CD8-positive, alpha-beta T cell (primary cell): ENCODE measurements at regions of chr1 and their contacts with region 1.

Region 1: DNA sequence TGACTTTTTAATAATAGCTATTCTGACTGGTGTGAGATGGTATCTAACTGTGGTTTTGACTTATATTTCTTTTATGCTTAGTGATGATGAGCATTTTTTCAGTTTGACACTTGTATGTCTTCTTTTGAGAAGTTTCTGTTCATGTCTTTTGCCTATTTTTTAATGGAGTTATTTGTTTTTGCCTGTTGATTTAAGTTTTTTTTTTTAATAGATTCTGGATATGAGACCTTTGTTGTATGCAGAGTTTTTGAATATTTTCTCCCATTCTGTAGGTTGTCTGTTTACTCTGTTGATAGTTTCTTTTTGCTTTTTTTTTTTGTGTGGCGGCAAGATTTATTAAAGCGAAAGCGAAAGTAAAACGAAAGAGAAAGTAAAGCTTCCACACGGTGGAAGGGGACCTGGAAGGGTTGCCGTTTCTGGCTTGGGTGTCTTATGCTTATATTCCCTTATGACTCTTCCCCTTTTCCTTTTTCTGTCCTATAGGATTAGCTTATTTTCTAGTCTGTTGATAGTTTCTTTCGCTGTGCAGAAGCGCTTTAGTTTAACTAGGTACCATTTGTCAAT is 67.6 kb downstream of the TBX19 start:
- DNase-seq: peak in 3 of 9 experiments; percentile 24 to 79 (median 63)
- ATAC-seq: peak; percentile 52
- H3K4me3 ChIP-seq: peak overlapping the region; percentile 42 to 52
- H3K4me3 Mint-ChIP-seq: peak overlapping the region; percentile 83
- H3K27ac ChIP-seq: peak overlapping the region; percentile 28 to 34
- H3K27ac Mint-ChIP-seq: peak overlapping the region; percentile 87
- H3K4me1 ChIP-seq: peaks cover 4% of the 10 kb centered on the region
- H3K4me1 Mint-ChIP-seq: peaks cover 22% of the 10 kb centered on the region
- H3K27me3 ChIP-seq: no peaks in the 10 kb centered on the region
- H3K27me3 Mint-ChIP-seq: no peaks in the 10 kb centered on the region
- CTCF ChIP-seq: no peak

Region 2: DNA sequence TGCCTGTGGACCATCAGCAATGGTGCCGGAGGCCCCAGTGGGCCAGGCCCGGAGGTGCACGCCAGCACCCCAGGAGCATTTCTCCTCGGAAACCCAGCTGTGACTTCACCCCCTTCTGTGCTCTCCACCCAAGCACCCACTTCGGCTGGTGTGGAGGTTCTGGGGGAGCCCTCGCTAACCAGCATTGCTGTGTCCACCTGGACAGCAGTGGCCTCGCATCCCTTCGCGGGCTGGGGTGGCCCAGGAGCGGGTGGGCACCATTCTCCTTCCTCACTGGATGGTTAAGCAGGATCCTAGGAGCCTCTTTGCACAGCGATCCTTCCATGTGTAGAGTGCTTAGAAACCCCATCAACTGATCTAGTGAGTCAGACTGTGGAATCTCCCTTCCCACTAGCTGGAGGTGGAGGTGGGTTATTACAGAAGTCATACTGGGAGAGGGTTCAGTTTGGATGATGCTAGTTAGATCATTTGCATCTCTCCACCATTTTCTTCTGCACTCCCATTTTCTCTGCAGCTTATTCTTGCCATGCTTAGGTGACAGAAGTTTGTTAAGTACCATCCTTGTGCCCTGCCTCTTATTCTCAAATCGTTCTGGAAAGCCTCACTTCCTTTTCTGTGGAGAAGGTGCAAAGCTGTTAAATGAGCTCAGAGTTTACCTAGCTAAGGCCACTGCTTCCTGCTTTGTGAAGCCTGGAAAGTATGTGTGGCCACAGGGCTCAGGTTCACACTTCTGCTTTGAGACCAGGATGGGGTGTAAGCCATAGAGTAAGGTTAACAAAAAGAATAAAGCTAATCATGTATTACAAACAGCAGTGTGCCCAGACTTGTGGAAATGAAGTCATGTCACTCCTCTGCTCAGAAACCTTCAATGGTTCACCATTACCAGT is 35.3 kb before region 1 on chr1:
- CTCF ChIA-PET with region 1: no interaction called
- POLR2A ChIA-PET with region 1: no interaction called
- intact Hi-C with region 1: no loop called
- DNase-seq: no peak
- ATAC-seq: no peak
- H3K4me3 ChIP-seq: no peak overlapping the region
- H3K4me3 Mint-ChIP-seq: no peak overlapping the region
- H3K27ac ChIP-seq: no peak overlapping the region
- H3K27ac Mint-ChIP-seq: no peak overlapping the region
- H3K4me1 ChIP-seq: no peaks in the 10 kb centered on the region
- H3K4me1 Mint-ChIP-seq: no peaks in the 10 kb centered on the region
- H3K27me3 ChIP-seq: no peaks in the 10 kb centered on the region
- H3K27me3 Mint-ChIP-seq: no peaks in the 10 kb centered on the region
- CTCF ChIP-seq: no peak

Region 3: GRCh38 chr1:168365719-168366479 is 17.7 kb after region 1 on chr1:
- CTCF ChIA-PET with region 1: interaction called, 108 read pairs
- POLR2A ChIA-PET with region 1: interaction called, 13 read pairs
- intact Hi-C with region 1: no loop called
- DNase-seq: peak in 2 of 9 experiments; percentile 53 to 57
- ATAC-seq: no peak
- H3K4me3 ChIP-seq: no peak overlapping the region
- H3K4me3 Mint-ChIP-seq: no peak overlapping the region
- H3K27ac ChIP-seq: no peak overlapping the region
- H3K27ac Mint-ChIP-seq: no peak overlapping the region
- H3K4me1 ChIP-seq: peaks cover 24% of the 10 kb centered on the region
- H3K4me1 Mint-ChIP-seq: peaks cover 30% of the 10 kb centered on the region
- H3K27me3 ChIP-seq: no peaks in the 10 kb centered on the region
- H3K27me3 Mint-ChIP-seq: no peaks in the 10 kb centered on the region
- CTCF ChIP-seq: no peak

Region 4: DNA sequence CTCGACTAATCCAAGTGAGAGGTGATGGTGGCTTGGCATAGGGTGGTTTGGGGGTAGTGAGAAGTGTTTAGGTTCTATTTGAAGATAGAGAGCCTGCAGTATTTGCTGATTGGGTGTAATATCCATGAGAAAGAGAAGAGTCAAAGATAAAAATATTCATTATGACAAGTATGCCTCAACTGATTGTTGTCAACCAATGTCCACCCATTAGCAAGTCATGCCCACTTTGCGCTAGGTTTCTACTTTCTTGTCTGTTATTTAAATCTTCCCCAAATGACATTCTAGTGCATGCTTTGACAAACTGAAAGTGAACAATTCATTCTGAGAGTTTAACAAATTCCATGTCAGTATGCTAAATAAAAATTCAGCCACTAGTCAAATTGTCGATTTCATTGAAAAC is 224.4 kb after region 1 on chr1:
- CTCF ChIA-PET with region 1: interaction called, 6 read pairs
- POLR2A ChIA-PET with region 1: no interaction called
- intact Hi-C with region 1: loop called in 1 of 2 experiments (anchors 1 kb)
- DNase-seq: no peak
- ATAC-seq: no peak
- H3K4me3 ChIP-seq: no peak overlapping the region
- H3K4me3 Mint-ChIP-seq: no peak overlapping the region
- H3K27ac ChIP-seq: no peak overlapping the region
- H3K27ac Mint-ChIP-seq: no peak overlapping the region
- H3K4me1 ChIP-seq: peaks cover 3% of the 10 kb centered on the region
- H3K4me1 Mint-ChIP-seq: peaks cover 26% of the 10 kb centered on the region
- H3K27me3 ChIP-seq: no peaks in the 10 kb centered on the region
- H3K27me3 Mint-ChIP-seq: no peaks in the 10 kb centered on the region
- CTCF ChIP-seq: no peak